Heart right ventricle (tissue), 16 donors: ENCODE measurements at regions of chr19 and their contacts with region 1.

Region 1: DNA sequence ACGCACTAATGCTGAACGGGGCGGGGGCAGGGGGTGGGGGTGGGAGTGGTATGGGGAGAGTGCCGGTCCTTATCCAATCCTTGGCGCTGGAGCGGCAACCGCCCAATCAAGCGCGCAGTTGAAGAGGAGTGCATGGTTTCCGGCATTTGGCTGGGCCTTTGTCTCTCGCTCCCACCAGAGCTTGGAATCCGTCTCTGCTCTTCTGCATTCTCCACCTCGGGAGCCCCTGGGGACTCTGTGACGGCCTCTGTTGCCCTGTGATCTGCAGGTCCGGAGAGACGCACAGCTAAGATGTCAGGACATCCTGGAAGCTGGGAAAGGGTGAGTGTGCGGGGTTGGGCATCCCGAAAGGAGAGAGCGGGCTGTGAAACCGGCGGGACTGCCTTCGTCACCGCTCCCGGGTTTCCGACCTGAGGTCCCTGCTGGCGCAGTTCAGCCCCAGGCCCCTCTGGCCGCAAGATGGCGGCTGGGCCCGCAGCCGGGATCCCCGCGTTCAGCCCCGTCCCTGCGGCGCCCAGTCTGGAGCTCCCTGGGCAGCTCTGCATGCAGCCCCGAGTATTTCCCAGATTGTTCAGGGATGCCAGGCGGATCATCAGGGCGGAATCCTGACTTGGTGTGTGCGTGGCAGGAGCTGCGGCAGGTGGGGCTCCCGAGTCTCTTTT is 53.6 kb upstream of the ZNF254 start:
- DNase-seq: peak; percentile 87 to 90
- ATAC-seq: peak; percentile 98 to 99 (median 99)
- H3K4me3 ChIP-seq: peak overlapping the region; percentile 67 to 93 (median 82)
- H3K27ac ChIP-seq: peak overlapping the region; percentile 84 to 96 (median 92)
- H3K4me1 ChIP-seq: peaks cover 4 to 43% (median 29%) of the 10 kb centered on the region in 9 donors
- H3K27me3 ChIP-seq: no peaks in the 10 kb centered on the region
- CTCF ChIP-seq: peak in 2 of 9 donors; percentile 15 to 24

Region 2: GRCh38 chr19:23395041-23395721 is 638.3 kb before region 1 on chr19 and contains the start of gene ZNF91:
- intact Hi-C with region 1: loop called in 1 of 10 experiments (anchors 10 kb)
- DNase-seq: peak; percentile 91 to 98
- ATAC-seq: peak; percentile 96 to 99 (median 98)
- H3K4me3 ChIP-seq: peak within 1 kb of the TSS; percentile 67 to 94 (median 78)
- H3K27ac ChIP-seq: peak within 1 kb of the TSS; percentile 90 to 98 (median 95)
- H3K4me1 ChIP-seq: peaks cover 7 to 44% (median 37%) of the 10 kb centered on the region in 9 donors
- H3K27me3 ChIP-seq: no peaks in the 10 kb centered on the region
- CTCF ChIP-seq: no peak
- total RNA-seq, gene ZNF91: 101 to 326 (median 158) TPM

Region 3: DNA sequence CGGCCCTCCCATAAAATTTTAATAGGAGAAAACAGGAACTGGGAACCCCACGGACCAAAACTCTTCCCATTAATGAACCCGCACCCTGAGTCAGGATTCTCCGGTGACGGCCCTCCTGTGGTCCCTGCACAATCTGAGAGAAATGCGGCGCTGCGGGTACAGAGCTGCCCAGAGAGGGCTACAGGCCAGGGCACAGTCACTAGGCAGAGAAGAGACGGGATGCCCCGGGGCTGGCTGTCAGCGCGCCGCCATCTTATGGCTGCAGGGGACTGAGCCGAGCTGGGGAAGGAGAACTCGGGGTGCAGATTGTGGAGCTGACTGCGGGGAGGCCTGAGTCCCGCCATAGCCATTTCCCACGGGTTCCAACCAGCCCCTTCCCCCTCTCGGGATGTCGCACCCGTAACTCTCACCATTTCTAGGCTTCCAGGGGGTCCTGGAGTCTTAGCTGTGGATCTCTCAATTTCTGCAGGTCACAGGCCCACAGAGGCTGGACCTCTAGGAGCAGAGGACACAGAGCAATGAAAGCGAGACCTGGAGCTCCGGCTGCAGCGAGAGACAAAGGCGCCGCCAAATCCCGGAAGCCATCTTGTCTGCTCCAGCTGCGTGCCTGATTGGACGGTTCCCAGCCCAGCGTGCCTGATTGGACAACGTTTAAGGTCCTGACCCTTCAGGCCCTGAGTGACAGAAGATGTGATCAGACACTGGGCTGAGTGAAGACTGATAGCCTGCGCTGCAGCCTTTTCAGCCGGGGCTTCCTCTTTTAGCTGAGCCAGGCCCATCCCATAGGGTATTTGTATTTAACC is 346.6 kb before region 1 on chr19 and contains the start of gene ZNF675:
- intact Hi-C with region 1: loop called in 1 of 10 experiments (anchors 10 kb)
- DNase-seq: peak; percentile 93 to 95
- ATAC-seq: peak; percentile 96 to 99 (median 98)
- H3K4me3 ChIP-seq: peak within 1 kb of the TSS; percentile 58 to 88 (median 82)
- H3K27ac ChIP-seq: peak within 1 kb of the TSS; percentile 32 to 87 (median 81)
- H3K4me1 ChIP-seq: peaks cover 0 to 16% (median 10%) of the 10 kb centered on the region in 9 donors
- H3K27me3 ChIP-seq: no peaks in the 10 kb centered on the region
- CTCF ChIP-seq: peak in 1 of 9 donors; percentile 30
- total RNA-seq, gene ZNF675: 2.4 to 5.7 (median 3.3) TPM

Region 4: DNA sequence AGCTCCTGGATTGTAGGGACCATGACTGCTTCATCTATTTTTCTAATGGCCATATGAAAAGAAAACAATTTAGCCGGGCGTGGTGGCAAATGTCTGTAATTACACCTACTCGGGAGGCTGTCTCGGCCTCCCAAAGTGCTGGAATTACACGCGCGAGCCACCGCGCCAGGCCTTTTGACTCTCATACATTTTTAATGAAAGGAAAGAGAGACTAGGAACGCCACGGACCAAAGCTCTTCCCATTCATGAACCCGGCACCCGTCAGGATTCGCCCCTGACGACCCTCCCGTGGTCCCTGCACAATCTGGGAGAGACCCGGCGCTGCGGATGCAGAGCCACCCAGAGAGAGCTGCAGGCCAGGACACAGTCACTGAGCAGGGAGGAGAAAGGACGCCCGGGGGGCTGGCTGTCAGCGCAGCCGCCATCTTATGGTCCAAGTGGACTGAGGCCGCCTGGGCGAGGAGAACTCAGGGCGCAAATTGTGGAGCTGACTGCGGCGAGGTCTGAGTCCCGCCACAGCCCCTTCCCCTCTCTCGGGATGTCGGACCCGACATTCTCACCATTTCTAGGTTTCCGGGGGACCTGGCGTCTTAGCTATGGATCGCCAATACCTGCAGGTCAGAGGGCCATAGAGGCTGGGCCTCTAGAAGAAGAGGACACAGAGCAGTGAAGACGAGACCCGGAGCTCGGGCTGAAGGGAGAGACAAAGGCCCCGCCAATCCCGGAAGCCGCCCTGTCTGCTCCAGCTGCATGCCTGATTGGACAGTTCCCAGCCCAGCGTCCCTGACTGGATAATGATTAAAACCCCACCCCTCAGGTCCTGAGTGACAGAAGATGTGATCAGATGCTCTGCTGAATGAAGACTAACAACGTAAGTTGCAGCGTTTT is 275.0 kb before region 1 on chr19 and contains the start of gene ZNF681:
- intact Hi-C with region 1: loop called in 1 of 10 experiments (anchors 10 kb)
- DNase-seq: peak; percentile 84 to 93
- ATAC-seq: peak; percentile 93 to 97 (median 96)
- H3K4me3 ChIP-seq: peak within 1 kb of the TSS; percentile 52 to 85 (median 74)
- H3K27ac ChIP-seq: peak within 1 kb of the TSS in 9 of 10 donors; percentile 42 to 89 (median 74)
- H3K4me1 ChIP-seq: peaks cover 0 to 21% (median 11%) of the 10 kb centered on the region in 9 donors
- H3K27me3 ChIP-seq: no peaks in the 10 kb centered on the region
- CTCF ChIP-seq: peak in 3 of 9 donors; percentile 6 to 12 (median 9)
- total RNA-seq, gene ZNF681: 0.37 to 0.89 (median 0.59) TPM

Region 5: DNA sequence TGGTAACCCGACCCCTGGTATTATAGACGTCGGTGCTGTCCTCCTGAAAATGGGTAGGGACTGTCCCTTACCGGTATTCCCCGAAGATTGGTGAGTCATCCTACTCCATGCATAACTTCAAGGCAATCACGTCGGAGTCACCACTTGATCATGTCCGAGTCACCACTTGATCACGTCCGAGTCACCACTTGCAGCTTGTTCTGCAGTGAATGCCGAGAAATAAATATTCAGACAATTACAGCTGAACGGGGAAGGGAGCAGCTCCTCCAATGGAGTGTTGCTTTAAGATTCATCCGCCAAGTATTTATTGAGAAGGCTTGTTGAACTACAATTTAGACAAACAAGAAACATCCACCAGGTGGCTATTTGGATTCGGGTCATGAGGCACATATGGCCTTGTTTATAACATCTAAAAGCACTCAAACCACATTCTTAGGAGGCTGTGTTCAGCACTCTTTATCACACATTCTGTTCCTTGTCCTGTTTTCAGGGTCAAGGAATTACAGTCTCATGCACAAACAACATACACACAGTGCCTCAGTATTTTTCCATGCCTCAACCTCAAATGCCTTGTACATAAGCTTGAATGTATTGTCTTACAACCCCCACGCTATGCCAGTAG is 75.7 kb before region 1 on chr19:
- intact Hi-C with region 1: no loop called
- DNase-seq: no peak
- ATAC-seq: no peak
- H3K4me3 ChIP-seq: no peak overlapping the region
- H3K27ac ChIP-seq: no peak overlapping the region
- H3K4me1 ChIP-seq: no peaks in the 10 kb centered on the region
- H3K27me3 ChIP-seq: peaks cover 0 to 6% (median 0%) of the 10 kb centered on the region in 7 donors
- CTCF ChIP-seq: no peak

Region 6: GRCh38 chr19:24086974-24087595 is 53.7 kb after region 1 on chr19 and contains the start of gene ZNF254:
- intact Hi-C with region 1: loop called in 1 of 10 experiments (anchors 5 kb)
- DNase-seq: peak; percentile 85 to 96
- ATAC-seq: peak; percentile 98 to 100 (median 100)
- H3K4me3 ChIP-seq: peak within 1 kb of the TSS; percentile 55 to 92 (median 72)
- H3K27ac ChIP-seq: peak within 1 kb of the TSS; percentile 70 to 98 (median 91)
- H3K4me1 ChIP-seq: peaks cover 5 to 24% (median 16%) of the 10 kb centered on the region in 9 donors
- H3K27me3 ChIP-seq: no peaks in the 10 kb centered on the region
- CTCF ChIP-seq: no peak
- total RNA-seq, gene ZNF254: 7.2 to 14.5 (median 11.7) TPM

Region 7: GRCh38 chr19:24127601-24128000 is 94.2 kb after region 1 on chr19:
- intact Hi-C with region 1: no loop called
- DNase-seq: no peak
- ATAC-seq: no peak
- H3K4me3 ChIP-seq: no peak overlapping the region
- H3K27ac ChIP-seq: no peak overlapping the region
- H3K4me1 ChIP-seq: no peaks in the 10 kb centered on the region
- H3K27me3 ChIP-seq: no peaks in the 10 kb centered on the region
- CTCF ChIP-seq: no peak